HEK293 (cell line): ENCODE measurements at regions of chr6 and their contacts with region 1.

Region 1: GRCh38 chr6:107847844-107848802 is 24.0 kb upstream of the SCML4 start:
- H3K4me3 ChIP-seq: peak overlapping the region; percentile 35
- H3K27ac ChIP-seq: no peak overlapping the region
- H3K4me1 ChIP-seq: no peaks in the 10 kb centered on the region
- CTCF ChIP-seq: peak; percentile 93

Region 2: GRCh38 chr6:107704347-107705013 is 143.6 kb before region 1 on chr6:
- CTCF ChIA-PET with region 1: interaction called, 22 read pairs
- POLR2A ChIA-PET with region 1: no interaction called
- H3K4me3 ChIP-seq: no peak overlapping the region
- H3K27ac ChIP-seq: no peak overlapping the region
- H3K4me1 ChIP-seq: no peaks in the 10 kb centered on the region
- CTCF ChIP-seq: 0 out of 2 replicates have a peak, but pooled peaks have one; percentile 21

Region 3: GRCh38 chr6:107784669-107785068 is 63.5 kb before region 1 on chr6:
- CTCF ChIA-PET with region 1: no interaction called
- POLR2A ChIA-PET with region 1: no interaction called
- H3K4me3 ChIP-seq: no peak overlapping the region
- H3K27ac ChIP-seq: no peak overlapping the region
- H3K4me1 ChIP-seq: no peaks in the 10 kb centered on the region
- CTCF ChIP-seq: no peak

Region 4: DNA sequence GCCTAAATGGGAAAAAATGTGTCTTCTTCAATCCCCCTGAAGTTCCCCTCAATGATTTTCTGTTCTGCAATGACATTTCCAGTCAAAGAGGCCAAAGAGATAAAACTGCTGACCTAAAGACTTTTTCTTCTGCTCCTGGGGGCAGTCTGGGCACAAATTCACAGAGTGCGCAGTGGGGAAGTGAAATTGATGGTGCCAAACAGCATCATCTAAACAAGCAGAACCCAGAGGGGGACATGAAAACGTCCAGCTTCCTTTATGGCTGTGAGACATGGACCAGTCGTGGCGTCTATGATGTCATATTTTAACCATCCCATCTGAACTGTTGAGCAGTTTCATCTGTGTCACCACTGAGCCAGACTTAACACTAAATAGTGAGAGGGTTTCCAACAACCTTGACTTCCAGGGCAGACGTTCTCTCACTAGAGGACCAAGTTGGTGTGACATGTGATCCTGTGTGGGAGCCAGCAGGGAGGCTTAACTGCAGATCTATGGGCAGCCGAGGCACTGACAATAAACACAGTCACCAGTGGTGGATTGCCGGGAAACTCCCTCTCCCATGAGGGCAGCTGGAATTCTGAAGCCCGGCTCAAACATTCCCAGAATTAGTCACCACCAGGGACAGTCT is 36.4 kb before region 1 on chr6:
- CTCF ChIA-PET with region 1: interaction called, 18 read pairs
- POLR2A ChIA-PET with region 1: no interaction called
- H3K4me3 ChIP-seq: no peak overlapping the region
- H3K27ac ChIP-seq: no peak overlapping the region
- H3K4me1 ChIP-seq: no peaks in the 10 kb centered on the region
- CTCF ChIP-seq: no peak

Region 5: DNA sequence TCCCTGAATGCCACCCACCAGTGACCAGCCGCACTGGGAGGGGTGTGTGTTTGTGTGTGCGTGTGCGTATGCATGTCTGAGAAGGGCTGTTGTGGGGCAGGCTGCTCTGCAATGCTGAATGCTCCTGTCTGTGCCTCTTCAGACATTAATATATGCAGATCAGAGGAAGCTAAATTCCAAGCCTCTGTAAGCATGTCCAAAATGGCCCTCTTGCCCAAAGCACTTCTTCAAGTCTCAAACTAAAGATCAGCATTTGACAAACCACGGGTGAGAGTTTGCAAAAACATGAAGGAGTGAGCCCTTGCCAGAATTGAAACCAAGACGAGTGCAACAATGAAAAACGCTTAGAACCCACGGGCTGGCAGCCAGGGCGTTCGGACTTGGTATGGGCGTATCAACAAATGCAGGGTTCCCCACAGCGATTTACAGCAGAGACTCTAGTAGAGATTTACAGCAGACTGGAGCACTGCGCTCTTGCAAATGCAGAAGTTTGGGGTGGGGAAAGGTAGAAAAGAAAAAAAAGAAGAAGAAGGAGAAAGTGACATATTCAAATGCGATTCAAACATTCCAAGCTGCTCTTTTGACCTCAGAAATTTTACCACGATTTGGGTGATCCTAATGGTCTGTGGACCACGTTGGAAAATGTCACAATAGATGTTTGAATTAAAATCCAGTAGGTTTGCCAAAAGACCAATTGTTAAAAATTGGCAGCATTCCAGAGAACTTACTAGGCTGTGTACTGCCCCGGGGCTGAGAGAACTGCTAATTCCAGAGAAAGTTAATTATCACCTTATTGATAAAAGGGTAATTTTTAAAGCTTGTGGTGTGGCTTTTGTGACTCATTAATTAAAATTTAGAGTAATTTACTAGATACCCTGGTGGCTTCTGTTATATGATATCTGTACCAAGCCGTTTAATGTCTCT is 27.5 kb before region 1 on chr6:
- CTCF ChIA-PET with region 1: interaction called, 31 read pairs
- POLR2A ChIA-PET with region 1: no interaction called
- H3K4me3 ChIP-seq: peak overlapping the region; percentile 0; the same call in 1 of the 2 replicates
- H3K27ac ChIP-seq: peak overlapping the region; percentile 32
- H3K4me1 ChIP-seq: peaks cover 11% of the 10 kb centered on the region
- CTCF ChIP-seq: no peak

Region 6: DNA sequence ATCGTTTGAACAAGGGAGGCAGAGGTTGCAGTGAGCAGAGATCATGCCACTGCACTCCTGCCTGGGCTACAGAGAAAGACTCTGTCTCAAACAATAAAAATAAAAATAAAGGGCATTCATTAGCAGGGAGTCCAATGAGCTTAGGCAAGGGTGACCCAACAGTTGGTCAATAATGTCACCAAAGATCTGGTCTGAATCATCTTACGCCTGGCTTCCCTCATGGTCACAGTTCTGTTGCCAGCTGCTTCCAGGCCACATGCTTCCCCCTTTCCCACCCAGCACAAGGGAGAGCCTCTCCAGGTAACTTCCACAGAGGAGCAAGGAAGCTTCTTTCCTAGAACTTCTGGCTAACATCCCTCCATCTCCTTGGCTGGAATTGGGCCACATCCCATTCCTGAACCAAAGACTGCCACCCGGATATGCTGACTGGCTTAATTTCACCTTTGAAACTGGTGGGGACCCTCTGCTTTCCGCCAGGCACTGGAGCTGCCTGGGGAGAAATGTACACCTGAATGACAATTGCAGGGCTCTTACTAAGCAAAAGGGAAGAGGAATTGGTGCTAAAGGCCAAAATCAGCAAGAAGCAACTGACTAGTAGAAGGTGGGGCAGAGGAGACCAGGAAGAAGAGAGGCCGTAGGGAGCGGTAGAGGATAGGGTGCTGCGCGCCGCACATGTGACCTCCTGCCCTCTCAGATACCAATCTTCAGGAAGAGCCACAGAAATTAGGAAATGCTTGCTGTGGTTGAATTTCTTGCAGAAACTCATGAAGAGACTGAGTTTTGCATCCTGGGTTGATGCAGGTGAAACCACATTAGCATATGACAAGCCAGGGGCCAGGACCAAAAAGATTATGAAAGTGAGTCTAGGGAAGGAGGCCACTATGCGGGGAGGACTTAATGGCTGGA is 15.7 kb before region 1 on chr6:
- CTCF ChIA-PET with region 1: interaction called, 24 read pairs
- POLR2A ChIA-PET with region 1: no interaction called
- H3K4me3 ChIP-seq: no peak overlapping the region
- H3K27ac ChIP-seq: no peak overlapping the region
- H3K4me1 ChIP-seq: no peaks in the 10 kb centered on the region
- CTCF ChIP-seq: no peak

Region 7: DNA sequence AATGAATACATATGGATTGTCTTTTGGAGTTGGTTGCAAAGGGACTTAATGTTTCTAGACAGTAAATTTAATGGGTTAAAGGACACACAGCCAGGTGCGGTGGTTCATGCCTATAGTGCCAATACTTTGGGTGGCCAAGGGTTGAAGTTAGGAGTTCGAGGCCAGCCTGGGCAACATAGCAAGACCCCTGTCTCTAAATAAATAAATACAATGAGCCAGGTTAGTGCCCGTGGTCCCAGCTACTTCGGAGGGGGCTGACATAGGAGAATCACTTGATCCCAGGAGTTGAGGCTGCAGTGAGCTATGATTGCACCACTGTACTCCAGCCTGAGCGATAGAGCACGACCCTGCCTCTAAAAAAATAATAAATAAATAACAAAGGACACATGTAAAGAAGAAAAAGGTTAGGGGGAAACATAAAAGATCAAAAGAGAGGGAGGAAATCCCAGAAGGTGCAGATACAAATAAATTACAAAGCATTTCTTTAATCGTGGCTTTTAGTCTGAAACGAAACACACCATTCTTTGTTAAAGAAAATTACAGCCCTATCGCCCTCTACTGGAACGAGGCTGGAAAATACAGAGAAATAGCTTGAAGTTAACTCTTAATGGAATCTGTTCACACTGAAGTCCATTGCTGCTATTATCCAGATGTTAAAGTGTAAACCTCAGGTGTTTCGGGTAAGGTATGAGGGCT is 18.6 kb after region 1 on chr6:
- CTCF ChIA-PET with region 1: interaction called, 32 read pairs
- POLR2A ChIA-PET with region 1: no interaction called
- H3K4me3 ChIP-seq: no peak overlapping the region
- H3K27ac ChIP-seq: no peak overlapping the region
- H3K4me1 ChIP-seq: no peaks in the 10 kb centered on the region
- CTCF ChIP-seq: peak; percentile 33; the same call in 1 of the 2 replicates